ENCODE measurements at regions of chr10 and their contacts with region 1.

Region 1: DNA sequence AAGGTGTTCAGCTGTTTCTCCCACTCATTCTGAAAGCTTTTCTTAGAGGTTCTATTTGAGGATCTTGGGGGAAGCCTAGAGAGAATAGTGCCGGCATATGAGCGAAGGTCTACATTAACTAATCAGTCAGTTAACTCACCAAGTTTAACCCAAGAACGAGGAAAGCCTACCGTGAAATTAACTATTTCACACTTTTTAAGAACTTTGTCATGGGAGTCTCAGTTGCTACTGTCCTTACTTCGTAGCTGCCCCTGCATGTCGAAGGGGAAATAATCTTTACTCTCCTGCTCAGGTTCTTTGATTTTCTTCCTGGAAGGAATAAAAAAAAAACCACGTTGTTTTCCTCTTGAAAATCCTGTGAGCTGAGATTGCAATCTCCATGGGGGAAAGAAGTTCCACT is 115.1 kb downstream of the FRMD4A start:
- DNase-seq: no peak
- H3K4me3 ChIP-seq: no peak overlapping the region
- H3K27ac ChIP-seq: no peak overlapping the region
- H3K4me1 ChIP-seq: no peaks in the 10 kb centered on the region
- H3K27me3 ChIP-seq: peaks cover 22% of the 10 kb centered on the region
- CTCF ChIP-seq: no peak

Region 2: GRCh38 chr10:14163377-14164086 is 52.1 kb before region 1 on chr10:
- CTCF ChIA-PET with region 1: interaction called, 13 read pairs
- POLR2A ChIA-PET with region 1: no interaction called
- intact Hi-C with region 1: no loop called
- DNase-seq: no peak
- H3K4me3 ChIP-seq: no peak overlapping the region
- H3K27ac ChIP-seq: no peak overlapping the region
- H3K4me1 ChIP-seq: no peaks in the 10 kb centered on the region
- H3K27me3 ChIP-seq: peaks cover 53% of the 10 kb centered on the region
- CTCF ChIP-seq: no peak